HAP-1 (cell line): ENCODE measurements at regions of chr10 and their contacts with region 1.

Region 1: GRCh38 chr10:92432596-92432995 is 141.3 kb downstream of the IDE start:
- DNase-seq: no peak
- H3K4me3 ChIP-seq: no peak overlapping the region
- H3K4me1 ChIP-seq: no peaks in the 10 kb centered on the region; the same call in 1 of the 2 replicates
- H3K27me3 ChIP-seq: no peaks in the 10 kb centered on the region

Region 2: GRCh38 chr10:92082583-92083280 is 349.9 kb before region 1 on chr10:
- in situ Hi-C with region 1: loop called (anchors 5 kb)
- DNase-seq: no peak
- H3K4me3 ChIP-seq: no peak overlapping the region
- H3K4me1 ChIP-seq: no peaks in the 10 kb centered on the region
- H3K27me3 ChIP-seq: no peaks in the 10 kb centered on the region

Region 3: GRCh38 chr10:92164036-92164696 is 268.4 kb before region 1 on chr10:
- in situ Hi-C with region 1: no loop called
- DNase-seq: no peak
- H3K4me3 ChIP-seq: no peak overlapping the region
- H3K4me1 ChIP-seq: no peaks in the 10 kb centered on the region
- H3K27me3 ChIP-seq: no peaks in the 10 kb centered on the region

Region 4: DNA sequence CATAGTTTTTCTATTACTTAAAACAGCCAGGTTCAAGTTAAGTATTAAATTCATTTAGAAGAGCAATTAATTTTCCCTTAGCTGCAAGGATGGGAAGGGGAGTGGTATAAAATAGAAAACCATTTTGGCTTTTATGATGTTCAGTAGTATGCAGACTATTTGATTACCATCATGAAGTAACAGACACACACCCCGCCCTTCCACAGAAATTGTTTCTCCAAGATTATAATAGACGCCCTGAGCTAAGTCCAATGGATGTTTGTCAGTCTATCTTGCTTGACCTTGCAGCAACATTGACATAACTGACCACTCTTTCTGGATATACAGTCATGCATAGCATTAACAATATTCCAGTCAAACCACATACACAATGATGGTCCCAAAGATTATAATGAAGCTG is 184.0 kb before region 1 on chr10:
- in situ Hi-C with region 1: no loop called
- DNase-seq: no peak
- H3K4me3 ChIP-seq: no peak overlapping the region
- H3K4me1 ChIP-seq: peaks cover 23% of the 10 kb centered on the region
- H3K27me3 ChIP-seq: no peaks in the 10 kb centered on the region